Endothelial cell of umbilical vein (primary cell): ENCODE measurements at regions of chr5 and their contacts with region 1.

Region 1: GRCh38 chr5:67010684-67011409 is 185.8 kb downstream of the CD180 start:
- DNase-seq: peak; percentile 96
- H3K4me3 ChIP-seq: peak overlapping the region in 1 of 3 experiments; percentile 1
- H3K27ac ChIP-seq: peak overlapping the region; percentile 96
- H3K4me1 ChIP-seq: peaks cover 88% of the 10 kb centered on the region
- H3K27me3 ChIP-seq: no peaks in the 10 kb centered on the region
- CTCF ChIP-seq: no peak
- POLR2A ChIP-seq: peak; percentile 94

Region 2: GRCh38 chr5:66828548-66829357 is 182.1 kb before region 1 on chr5:
- CTCF ChIA-PET with region 1: interaction called, 7 read pairs
- POLR2A ChIA-PET with region 1: interaction called, 5 read pairs
- dilution Hi-C with region 1: no loop called
- intact Hi-C with region 1: loop called (anchors 1 kb)
- DNase-seq: peak; percentile 92
- H3K4me3 ChIP-seq: peak overlapping the region; percentile 54 to 70 (median 55)
- H3K27ac ChIP-seq: peak overlapping the region; percentile 91
- H3K4me1 ChIP-seq: peaks cover 22% of the 10 kb centered on the region
- H3K27me3 ChIP-seq: no peaks in the 10 kb centered on the region
- CTCF ChIP-seq: no peak
- POLR2A ChIP-seq: peak; percentile 95

Region 3: DNA sequence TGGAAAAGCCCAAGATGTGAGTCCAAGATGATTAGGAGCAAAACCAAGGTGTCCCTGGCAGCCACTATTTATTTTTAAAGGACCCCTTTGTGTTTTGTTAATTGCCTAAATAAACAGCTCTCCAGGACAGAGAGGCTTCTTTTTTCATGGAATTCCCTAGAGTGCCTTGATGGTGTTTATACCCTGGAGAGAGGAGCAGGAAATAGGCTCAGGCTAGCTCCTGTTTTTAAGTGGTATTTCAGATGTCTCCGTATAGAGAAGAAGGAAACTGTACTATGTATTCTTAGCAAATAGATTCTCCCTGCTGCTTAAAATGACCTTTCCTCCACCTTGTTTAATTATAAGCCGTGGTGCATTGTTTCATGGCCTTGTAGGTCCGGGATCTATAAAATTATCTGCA is 106.7 kb before region 1 on chr5:
- CTCF ChIA-PET with region 1: no interaction called
- POLR2A ChIA-PET with region 1: no interaction called
- dilution Hi-C with region 1: no loop called
- intact Hi-C with region 1: no loop called
- DNase-seq: no peak
- H3K4me3 ChIP-seq: no peak overlapping the region
- H3K27ac ChIP-seq: no peak overlapping the region
- H3K4me1 ChIP-seq: no peaks in the 10 kb centered on the region
- H3K27me3 ChIP-seq: no peaks in the 10 kb centered on the region
- CTCF ChIP-seq: no peak
- POLR2A ChIP-seq: no peak

Region 4: GRCh38 chr5:67032921-67033664 is 22.2 kb after region 1 on chr5:
- CTCF ChIA-PET with region 1: interaction called, 15 read pairs
- POLR2A ChIA-PET with region 1: interaction called, 3 read pairs
- dilution Hi-C with region 1: no loop called
- intact Hi-C with region 1: no loop called
- DNase-seq: no peak
- H3K4me3 ChIP-seq: no peak overlapping the region
- H3K27ac ChIP-seq: no peak overlapping the region
- H3K4me1 ChIP-seq: peaks cover 51% of the 10 kb centered on the region
- H3K27me3 ChIP-seq: no peaks in the 10 kb centered on the region
- CTCF ChIP-seq: no peak
- POLR2A ChIP-seq: no peak

Region 5: DNA sequence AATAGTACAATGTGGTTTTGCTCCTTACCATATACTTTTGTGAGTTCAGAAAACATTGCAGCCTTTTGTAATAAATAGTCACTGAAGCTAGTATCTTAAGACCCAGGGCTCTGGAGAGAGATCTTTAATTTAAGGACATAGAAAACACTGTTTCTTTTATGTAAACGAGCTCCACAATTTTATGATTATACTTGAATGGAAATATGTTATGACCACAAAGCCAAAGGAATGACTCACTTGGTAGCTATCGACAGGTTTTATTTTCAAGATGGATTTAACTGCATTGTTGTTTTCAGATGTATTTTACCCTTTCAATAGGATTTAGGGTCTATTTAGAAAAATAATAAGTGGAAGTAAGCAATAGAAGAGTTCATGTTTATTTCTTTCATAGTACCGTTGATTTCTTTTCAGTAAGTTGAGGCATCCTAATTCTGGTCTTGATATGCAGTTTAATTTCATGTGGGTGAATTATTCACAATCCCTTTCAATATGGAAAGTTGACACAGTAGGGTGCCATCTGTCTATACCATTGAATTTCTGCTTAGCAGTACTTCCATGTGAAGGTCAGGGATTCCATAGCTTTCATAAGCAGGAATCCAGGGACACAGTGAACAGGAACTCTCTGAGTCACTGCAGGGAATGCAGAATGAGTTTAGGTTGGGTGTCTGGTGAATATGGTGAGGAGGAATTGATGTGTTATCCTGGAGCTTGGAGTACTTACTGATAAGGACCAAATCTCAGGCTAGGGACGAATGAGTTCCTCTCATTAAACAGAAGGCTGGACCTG is 28.2 kb after region 1 on chr5:
- CTCF ChIA-PET with region 1: interaction called, 15 read pairs
- POLR2A ChIA-PET with region 1: no interaction called
- dilution Hi-C with region 1: no loop called
- intact Hi-C with region 1: loop called (anchors 1 kb)
- DNase-seq: peak; percentile 85
- H3K4me3 ChIP-seq: no peak overlapping the region
- H3K27ac ChIP-seq: peak overlapping the region; percentile 65
- H3K4me1 ChIP-seq: peaks cover 46% of the 10 kb centered on the region
- H3K27me3 ChIP-seq: no peaks in the 10 kb centered on the region
- CTCF ChIP-seq: no peak
- POLR2A ChIP-seq: no peak

Region 6: GRCh38 chr5:67059744-67060490 is 49.1 kb after region 1 on chr5:
- CTCF ChIA-PET with region 1: interaction called, 4 read pairs
- POLR2A ChIA-PET with region 1: interaction called, 3 read pairs
- dilution Hi-C with region 1: no loop called
- intact Hi-C with region 1: loop called (anchors 1 kb)
- DNase-seq: peak; percentile 82
- H3K4me3 ChIP-seq: peak overlapping the region in 1 of 3 experiments; percentile 30
- H3K27ac ChIP-seq: peak overlapping the region; percentile 89
- H3K4me1 ChIP-seq: peaks cover 68% of the 10 kb centered on the region
- H3K27me3 ChIP-seq: no peaks in the 10 kb centered on the region
- CTCF ChIP-seq: no peak
- POLR2A ChIP-seq: no peak

Region 7: DNA sequence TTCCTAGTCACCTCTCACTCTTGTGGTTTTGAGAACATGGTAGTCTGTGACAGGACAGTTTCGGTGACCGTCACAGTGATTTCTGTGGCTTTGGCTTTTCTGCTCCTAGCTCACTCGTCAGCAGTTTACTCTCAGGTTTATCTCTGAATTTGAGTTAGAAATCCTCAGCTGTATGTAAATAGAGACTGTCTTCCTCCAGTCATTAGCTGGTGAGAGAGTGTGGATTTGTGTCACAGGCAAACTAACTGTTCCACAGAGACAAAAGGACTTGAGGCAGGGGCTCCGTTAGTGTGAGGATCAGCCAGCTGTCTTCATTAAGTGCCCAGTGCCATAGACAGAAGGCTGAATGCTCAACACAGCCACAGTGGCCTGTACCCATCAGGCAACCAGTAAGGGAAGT is 54.4 kb after region 1 on chr5:
- CTCF ChIA-PET with region 1: interaction called, 3 read pairs
- POLR2A ChIA-PET with region 1: interaction called, 3 read pairs
- dilution Hi-C with region 1: no loop called
- intact Hi-C with region 1: loop called (anchors 1 kb)
- DNase-seq: no peak
- H3K4me3 ChIP-seq: no peak overlapping the region
- H3K27ac ChIP-seq: no peak overlapping the region
- H3K4me1 ChIP-seq: peaks cover 45% of the 10 kb centered on the region
- H3K27me3 ChIP-seq: no peaks in the 10 kb centered on the region
- CTCF ChIP-seq: no peak
- POLR2A ChIP-seq: no peak

Region 8: DNA sequence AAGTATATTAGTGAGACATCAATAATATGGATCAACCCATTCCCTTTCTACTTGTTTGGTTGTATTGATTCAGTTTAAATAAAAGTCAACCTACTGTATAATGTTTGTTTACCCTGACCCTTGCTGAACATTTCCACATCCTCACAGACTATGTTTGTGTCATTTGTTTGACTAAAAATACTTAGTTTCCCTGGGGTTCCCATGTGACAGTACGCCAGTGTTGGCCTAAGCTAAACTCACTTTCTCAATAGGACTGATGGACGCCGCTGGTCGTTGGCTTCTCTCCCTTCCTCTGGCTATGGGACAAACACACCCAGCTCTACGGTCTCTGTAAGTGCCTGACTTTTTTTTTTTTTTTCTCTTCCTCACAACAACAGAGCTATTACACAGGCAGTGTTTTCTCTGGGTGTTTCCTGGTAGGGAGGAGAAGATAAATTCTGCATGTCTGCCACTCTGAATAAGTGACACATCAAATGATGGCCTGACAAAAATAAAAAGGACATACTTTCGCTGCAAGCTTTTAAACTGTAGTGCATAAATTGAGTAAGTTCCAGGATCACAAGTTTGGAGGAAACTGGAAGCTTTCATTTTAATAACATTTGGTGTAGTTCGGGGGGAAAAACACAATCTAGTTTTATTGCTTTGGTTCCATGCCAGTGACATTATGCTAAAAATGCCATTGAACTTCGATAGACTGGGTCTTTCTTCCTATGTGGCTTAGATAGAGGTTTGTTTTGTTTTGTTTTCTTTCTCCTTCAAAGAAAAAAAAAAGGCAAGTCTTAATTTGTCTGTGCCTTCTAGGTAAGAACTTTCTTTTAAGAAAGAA is 84.7 kb after region 1 on chr5:
- CTCF ChIA-PET with region 1: no interaction called
- POLR2A ChIA-PET with region 1: no interaction called
- dilution Hi-C with region 1: no loop called
- intact Hi-C with region 1: no loop called
- DNase-seq: peak; percentile 78
- H3K4me3 ChIP-seq: no peak overlapping the region
- H3K27ac ChIP-seq: no peak overlapping the region
- H3K4me1 ChIP-seq: peaks cover 17% of the 10 kb centered on the region
- H3K27me3 ChIP-seq: no peaks in the 10 kb centered on the region
- CTCF ChIP-seq: no peak
- POLR2A ChIP-seq: no peak